CD8-positive, alpha-beta memory T cell (primary cell): ENCODE measurements at regions of chr7 and their contacts with region 1.

Region 1: GRCh38 chr7:44891372-44891771 is 6.0 kb upstream of the PURB start:
- DNase-seq: peak; percentile 16 to 76 (median 66)
- H3K4me3 ChIP-seq: peak overlapping the region; percentile 49
- H3K4me3 Mint-ChIP-seq: peak overlapping the region; percentile 34 to 82 (median 67)
- H3K27ac ChIP-seq: peak overlapping the region; percentile 71
- H3K27ac Mint-ChIP-seq: peak overlapping the region; percentile 88 to 99 (median 99)
- H3K4me1 ChIP-seq: peaks cover 27% of the 10 kb centered on the region
- H3K4me1 Mint-ChIP-seq: peaks cover 36 to 58% (median 47%) of the 10 kb centered on the region in 3 donors
- H3K27me3 ChIP-seq: no peaks in the 10 kb centered on the region
- H3K27me3 Mint-ChIP-seq: no peaks in the 10 kb centered on the region

Region 2: DNA sequence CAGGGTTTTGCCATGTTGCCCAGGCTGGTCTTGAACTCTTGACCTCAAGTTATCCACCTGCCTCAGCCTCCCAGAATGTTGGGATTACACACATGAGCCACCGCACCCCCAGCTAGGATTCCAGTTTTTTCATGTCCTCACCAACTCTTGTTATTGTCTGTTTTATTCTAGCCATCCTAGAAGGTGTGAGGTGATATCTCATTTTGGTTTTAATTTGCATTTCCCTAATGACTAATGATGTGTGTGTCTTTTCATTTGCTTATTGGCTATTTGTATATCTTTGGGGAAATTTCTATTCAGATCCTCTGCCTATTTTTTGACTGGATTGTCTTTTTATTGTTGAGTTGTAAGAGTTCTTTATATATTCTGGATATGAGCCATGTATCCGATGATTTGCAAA is 201.9 kb before region 1 on chr7:
- CTCF ChIA-PET with region 1: no interaction called
- POLR2A ChIA-PET with region 1: interaction called, 11 read pairs
- DNase-seq: no peak
- H3K4me3 ChIP-seq: no peak overlapping the region
- H3K4me3 Mint-ChIP-seq: no peak overlapping the region
- H3K27ac ChIP-seq: no peak overlapping the region
- H3K27ac Mint-ChIP-seq: peak overlapping the region in 2 of 8 donors; percentile 24 to 54
- H3K4me1 ChIP-seq: no peaks in the 10 kb centered on the region
- H3K4me1 Mint-ChIP-seq: peaks cover 0 to 3% (median 0%) of the 10 kb centered on the region in 3 donors
- H3K27me3 ChIP-seq: no peaks in the 10 kb centered on the region
- H3K27me3 Mint-ChIP-seq: no peaks in the 10 kb centered on the region

Region 3: DNA sequence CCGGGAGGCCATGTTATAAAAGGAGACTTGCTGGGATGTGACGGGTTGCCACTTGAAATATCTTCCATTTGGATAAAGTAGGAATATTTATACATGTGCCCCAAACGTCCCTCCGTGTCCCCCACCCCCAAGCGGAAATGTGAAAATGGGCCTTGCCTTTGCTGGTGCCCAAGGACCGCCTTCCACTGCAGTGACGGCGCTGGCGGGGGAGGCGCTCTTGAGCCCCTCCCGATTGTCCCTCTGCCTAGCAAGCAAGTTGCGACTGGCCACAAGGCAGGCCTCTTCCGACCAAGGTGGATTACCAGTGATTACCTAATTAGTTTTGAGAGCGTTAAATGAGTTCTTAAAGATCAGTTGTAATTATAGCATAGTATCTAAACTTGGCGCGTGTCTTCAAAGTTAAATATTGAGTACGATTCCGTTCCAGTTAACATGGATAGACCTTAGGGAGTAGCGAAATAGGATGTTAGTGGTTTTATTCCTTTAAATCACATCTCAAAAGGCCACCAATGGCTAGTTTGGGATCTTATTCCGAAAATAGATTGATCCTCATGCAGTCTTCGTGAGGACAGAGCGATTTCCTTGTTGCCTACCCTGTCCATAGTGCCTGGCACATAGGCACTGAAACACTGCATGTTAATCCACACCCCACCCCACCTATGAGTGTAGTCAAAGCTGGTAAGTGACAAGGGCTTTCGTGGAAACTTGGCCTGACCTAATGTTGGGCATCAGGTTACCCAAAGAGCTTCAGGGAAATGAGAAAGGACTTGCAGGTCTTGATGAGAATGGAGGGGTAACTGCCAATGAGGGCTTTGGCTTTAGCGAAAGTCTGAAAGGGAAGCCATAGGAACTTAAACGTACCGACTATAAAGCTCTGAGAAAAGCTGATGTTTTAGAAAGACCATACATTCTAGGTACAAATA is 93.8 kb before region 1 on chr7:
- CTCF ChIA-PET with region 1: no interaction called
- POLR2A ChIA-PET with region 1: no interaction called
- DNase-seq: peak; percentile 73 to 91 (median 80)
- H3K4me3 ChIP-seq: peak overlapping the region; percentile 72
- H3K4me3 Mint-ChIP-seq: peak overlapping the region; percentile 90 to 99 (median 92)
- H3K27ac ChIP-seq: peak overlapping the region; percentile 98
- H3K27ac Mint-ChIP-seq: peak overlapping the region; percentile 94 to 99 (median 98)
- H3K4me1 ChIP-seq: peaks cover 19% of the 10 kb centered on the region
- H3K4me1 Mint-ChIP-seq: peaks cover 34 to 51% (median 41%) of the 10 kb centered on the region in 3 donors
- H3K27me3 ChIP-seq: no peaks in the 10 kb centered on the region
- H3K27me3 Mint-ChIP-seq: peaks cover 0 to 5% of the 10 kb centered on the region in 2 donors

Region 4: GRCh38 chr7:44914992-44915607 is 23.7 kb after region 1 on chr7:
- CTCF ChIA-PET with region 1: interaction called, 5 read pairs
- POLR2A ChIA-PET with region 1: interaction called, 10 read pairs
- DNase-seq: peak in 4 of 5 donors; percentile 30 to 90 (median 78)
- H3K4me3 ChIP-seq: no peak overlapping the region
- H3K4me3 Mint-ChIP-seq: peak overlapping the region in 1 of 7 donors; percentile 22
- H3K27ac ChIP-seq: peak overlapping the region; percentile 35
- H3K27ac Mint-ChIP-seq: peak overlapping the region in 6 of 8 donors; percentile 70 to 96 (median 87)
- H3K4me1 ChIP-seq: peaks cover 7% of the 10 kb centered on the region
- H3K4me1 Mint-ChIP-seq: peaks cover 3 to 17% (median 4%) of the 10 kb centered on the region in 3 donors
- H3K27me3 ChIP-seq: no peaks in the 10 kb centered on the region
- H3K27me3 Mint-ChIP-seq: no peaks in the 10 kb centered on the region